HEK293 (cell line): ENCODE measurements at regions of chr19 and their contacts with region 1.

Region 1: GRCh38 chr19:7098701-7099596 is 29.4 kb downstream of the ZNF557 start:
- H3K4me3 ChIP-seq: peak overlapping the region; percentile 51
- H3K27ac ChIP-seq: peak overlapping the region; percentile 89
- H3K4me1 ChIP-seq: no peaks in the 10 kb centered on the region
- CTCF ChIP-seq: no peak

Region 2: GRCh38 chr19:7069042-7069903 is 29.7 kb before region 1 on chr19 and contains the start of gene ZNF557:
- CTCF ChIA-PET with region 1: interaction called, 3 read pairs
- POLR2A ChIA-PET with region 1: interaction called, 30 read pairs
- H3K4me3 ChIP-seq: peak within 1 kb of the TSS; percentile 88
- H3K27ac ChIP-seq: peak within 1 kb of the TSS; percentile 37; the same call in 1 of the 2 replicates
- H3K4me1 ChIP-seq: no peaks in the 10 kb centered on the region
- CTCF ChIP-seq: no peak; the same call in 1 of the 2 replicates

Region 3: DNA sequence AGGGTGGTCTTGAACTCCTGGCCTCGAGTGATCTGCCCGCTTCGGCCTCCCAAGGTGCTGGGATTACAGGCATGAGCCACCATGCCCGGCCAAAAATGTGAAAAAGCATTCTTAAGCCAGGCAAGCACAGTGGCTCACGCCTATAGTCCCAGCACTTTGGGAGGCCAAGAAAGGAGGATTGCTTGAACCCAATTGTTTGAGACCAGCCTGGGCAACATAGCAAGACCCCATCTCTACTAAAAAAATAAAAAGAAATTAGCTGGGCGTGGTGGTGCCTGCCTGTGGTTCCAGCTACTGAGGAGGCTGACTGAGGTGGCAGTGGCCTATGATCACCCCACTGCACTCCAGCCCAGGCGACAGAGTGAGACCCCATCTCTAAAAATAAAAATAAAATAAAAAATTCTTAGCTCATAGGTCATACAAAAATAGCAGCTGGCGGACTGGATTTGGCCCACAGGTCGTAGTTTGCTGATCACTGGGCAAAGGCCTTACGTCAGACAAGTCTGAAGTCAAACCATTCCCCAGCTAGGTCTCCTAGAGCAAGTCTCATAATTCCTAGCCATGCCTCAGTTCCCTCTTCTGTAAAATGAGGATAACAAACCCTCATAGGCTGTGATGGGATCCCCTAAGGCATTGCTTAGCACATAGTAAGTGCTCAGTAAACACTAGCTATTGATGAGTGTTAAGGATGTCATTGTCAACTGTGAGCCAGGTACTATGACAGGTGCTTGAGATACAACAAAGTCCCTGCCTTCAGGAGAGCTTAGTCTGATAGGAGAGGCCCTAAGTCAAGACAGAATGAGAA is 159.3 kb after region 1 on chr19:
- CTCF ChIA-PET with region 1: no interaction called
- POLR2A ChIA-PET with region 1: no interaction called
- H3K4me3 ChIP-seq: no peak overlapping the region
- H3K27ac ChIP-seq: no peak overlapping the region
- H3K4me1 ChIP-seq: peaks cover 2% of the 10 kb centered on the region
- CTCF ChIP-seq: no peak